ENCODE measurements at regions of chr10 and their contacts with region 1.

Region 1: DNA sequence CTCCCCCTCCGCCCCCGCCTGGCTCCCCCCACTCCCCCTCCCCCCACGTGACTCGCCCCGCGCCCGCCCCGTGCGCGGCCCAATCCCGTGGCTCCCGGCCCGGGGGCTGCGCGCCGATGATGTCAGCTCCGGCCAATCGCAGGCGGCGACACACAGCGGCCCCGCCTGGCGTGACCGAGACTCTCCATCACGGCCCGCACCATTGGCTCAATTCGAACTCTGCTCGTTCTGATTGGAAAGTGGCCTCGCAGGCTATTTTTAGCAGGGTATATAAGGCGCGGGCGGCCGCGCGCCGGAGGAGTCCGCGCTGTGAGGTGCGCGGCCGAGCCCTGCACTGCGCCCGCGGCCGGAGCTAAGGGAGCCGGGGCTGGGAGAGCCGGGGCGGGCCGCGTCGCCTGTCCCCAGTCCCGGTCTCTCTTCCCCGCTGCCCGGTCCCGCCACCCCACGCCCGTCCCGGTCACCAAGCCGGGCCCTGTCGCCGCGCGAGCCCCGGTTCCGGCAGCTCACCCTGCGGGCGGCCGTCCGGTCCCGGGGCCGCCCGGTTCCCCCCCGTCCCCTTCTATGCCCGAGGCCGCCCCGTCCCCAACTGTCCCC is 345 bp upstream of the KLF6 start:
- DNase-seq: peak; percentile 97 to 99
- ATAC-seq: peak; percentile 70 to 80
- H3K4me3 ChIP-seq: peak overlapping the region; percentile 82
- H3K27ac ChIP-seq: peak overlapping the region; percentile 100
- H3K4me1 ChIP-seq: peaks cover 26% of the 10 kb centered on the region
- CTCF ChIP-seq: no peak
- EP300 ChIP-seq: peak in 1 of 2 experiments; percentile 22; a peak in 2 of 5 replicates
- POLR2A ChIP-seq: peak; percentile 98
- RAD21 ChIP-seq: no peak; a peak in 1 of 5 replicates

Region 2: DNA sequence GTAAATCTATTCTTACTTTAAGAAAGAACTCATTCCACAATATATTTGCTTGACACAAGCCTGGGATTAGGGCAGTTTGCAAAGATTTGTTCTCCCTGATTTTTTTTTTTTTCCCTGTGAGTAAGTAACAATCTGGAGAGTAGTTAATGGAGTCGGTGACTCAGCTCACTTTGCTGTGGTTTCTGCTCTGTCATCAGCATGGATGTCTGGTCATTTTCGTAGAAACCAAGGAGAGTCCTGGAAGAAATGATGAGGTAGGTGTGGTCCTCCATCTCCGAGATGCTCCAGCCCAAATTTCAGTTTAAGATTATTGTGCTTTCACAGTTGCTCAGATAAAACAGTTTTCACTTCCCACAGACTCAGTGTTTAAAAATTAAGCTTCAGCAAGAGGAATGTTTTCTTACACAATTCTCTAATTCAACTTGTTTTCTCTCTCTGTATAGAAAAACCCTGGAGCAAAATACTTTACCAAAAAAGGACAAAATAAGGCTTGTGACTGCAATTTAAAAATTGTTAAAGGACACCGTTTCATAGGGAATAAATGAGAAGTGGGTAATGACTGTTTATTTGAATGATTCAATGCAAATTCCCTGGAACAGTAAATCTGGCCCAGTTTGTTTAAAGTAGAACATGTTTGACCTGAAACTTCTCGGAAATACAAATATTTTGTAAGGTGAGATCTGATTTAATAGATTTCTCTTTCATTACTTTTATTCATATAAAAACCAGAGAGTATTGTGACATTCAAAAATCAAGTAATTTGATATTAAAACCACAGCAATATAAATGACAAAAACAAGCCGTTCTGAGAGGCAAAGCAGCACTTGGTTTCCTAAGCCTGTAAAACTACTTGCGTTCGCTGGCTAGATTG is 536.2 kb before region 1 on chr10:
- CTCF ChIA-PET with region 1: no interaction called
- POLR2A ChIA-PET with region 1: interaction called, 18 read pairs
- DNase-seq: peak; percentile 69 to 77
- ATAC-seq: peak; percentile 89 to 94
- H3K4me3 ChIP-seq: no peak overlapping the region
- H3K27ac ChIP-seq: peak overlapping the region; percentile 78 to 88
- H3K4me1 ChIP-seq: peaks cover 20% of the 10 kb centered on the region
- CTCF ChIP-seq: no peak
- EP300 ChIP-seq: no peak
- POLR2A ChIP-seq: no peak
- RAD21 ChIP-seq: no peak

Region 3: GRCh38 chr10:3801558-3802192 is 16.3 kb after region 1 on chr10:
- CTCF ChIA-PET with region 1: interaction called, 8 read pairs
- POLR2A ChIA-PET with region 1: interaction called, 75 read pairs
- DNase-seq: no peak
- ATAC-seq: no peak
- H3K4me3 ChIP-seq: no peak overlapping the region
- H3K27ac ChIP-seq: peak overlapping the region; percentile 82; a peak in 4 of 6 replicates
- H3K4me1 ChIP-seq: peaks cover 41% of the 10 kb centered on the region
- CTCF ChIP-seq: no peak
- EP300 ChIP-seq: no peak
- POLR2A ChIP-seq: no peak
- RAD21 ChIP-seq: no peak

Region 4: DNA sequence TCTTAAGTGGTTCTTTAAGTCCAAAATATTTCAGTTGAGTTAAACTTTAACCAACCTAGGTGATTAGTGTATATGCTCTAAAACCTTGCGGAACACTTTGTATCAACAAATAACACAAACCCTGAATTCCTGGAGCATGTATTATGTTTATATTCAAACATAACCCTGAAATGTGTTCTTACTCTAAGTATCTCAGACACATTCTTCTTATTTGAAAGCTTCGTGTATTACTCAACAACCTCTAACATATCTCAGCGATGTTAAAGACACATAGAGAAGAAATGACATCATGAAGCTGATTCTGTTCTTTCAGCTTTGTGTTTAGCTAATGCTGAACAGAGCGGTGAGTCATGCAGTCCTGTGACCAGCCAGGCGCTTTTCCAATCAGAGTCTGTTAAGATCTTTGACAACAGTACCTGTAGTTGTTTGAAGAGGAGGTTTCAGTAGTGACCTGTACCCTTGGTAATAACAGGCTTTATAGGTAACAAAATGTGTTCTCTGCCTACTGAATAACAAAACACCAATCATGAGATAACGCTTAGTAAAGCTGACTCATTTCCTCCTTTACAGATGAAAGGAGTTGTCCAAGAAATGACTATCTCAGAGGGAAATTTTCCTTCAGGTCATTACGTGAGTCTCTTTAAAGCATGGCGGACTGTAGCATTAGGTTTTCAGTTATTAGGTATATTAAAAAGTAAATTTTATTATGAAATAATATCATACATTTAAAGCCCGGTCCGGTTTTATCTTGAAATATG is 67.0 kb after region 1 on chr10:
- CTCF ChIA-PET with region 1: interaction called, 7 read pairs
- POLR2A ChIA-PET with region 1: interaction called, 79 read pairs
- DNase-seq: peak; percentile 94 to 97
- ATAC-seq: peak; percentile 93
- H3K4me3 ChIP-seq: 0 out of 3 replicates have a peak overlapping the region, but pooled peaks have one; percentile 10
- H3K27ac ChIP-seq: peak overlapping the region; percentile 92 to 94
- H3K4me1 ChIP-seq: peaks cover 52% of the 10 kb centered on the region
- CTCF ChIP-seq: no peak
- EP300 ChIP-seq: peak; percentile 87 to 90; a peak in 4 of 5 replicates
- POLR2A ChIP-seq: no peak
- RAD21 ChIP-seq: peak; percentile 20 to 66

Region 5: GRCh38 chr10:4678023-4678950 is 892.9 kb after region 1 on chr10:
- CTCF ChIA-PET with region 1: no interaction called
- POLR2A ChIA-PET with region 1: interaction called, 15 read pairs
- DNase-seq: peak; percentile 28 to 93
- ATAC-seq: peak; percentile 88 to 94
- H3K4me3 ChIP-seq: peak overlapping the region; percentile 5; the same call in 1 of the 3 replicates
- H3K27ac ChIP-seq: peak overlapping the region; percentile 86 to 87
- H3K4me1 ChIP-seq: peaks cover 46% of the 10 kb centered on the region
- CTCF ChIP-seq: no peak
- EP300 ChIP-seq: peak in 1 of 2 experiments; percentile 46; a peak in 2 of 5 replicates
- POLR2A ChIP-seq: no peak
- RAD21 ChIP-seq: no peak

Measured in A549 (cell line).